Gastrocnemius medialis (tissue), 4 donors: ENCODE measurements at regions of chr17 and their contacts with region 1.

Region 1: GRCh38 chr17:45317112-45317928 is 500 bp upstream of the MAP3K14 start:
- DNase-seq: peak; percentile 100
- ATAC-seq: peak; percentile 84 to 85
- H3K4me3 ChIP-seq: peak overlapping the region; percentile 41 to 74 (median 62)
- H3K27ac ChIP-seq: peak overlapping the region; percentile 86 to 98 (median 92)
- H3K4me1 ChIP-seq: peaks cover 43 to 45% of the 10 kb centered on the region in 2 donors
- H3K27me3 ChIP-seq: no peaks in the 10 kb centered on the region
- CTCF ChIP-seq: peak in 1 of 5 experiments; percentile 6
- POLR2A ChIP-seq: no peak

Region 2: DNA sequence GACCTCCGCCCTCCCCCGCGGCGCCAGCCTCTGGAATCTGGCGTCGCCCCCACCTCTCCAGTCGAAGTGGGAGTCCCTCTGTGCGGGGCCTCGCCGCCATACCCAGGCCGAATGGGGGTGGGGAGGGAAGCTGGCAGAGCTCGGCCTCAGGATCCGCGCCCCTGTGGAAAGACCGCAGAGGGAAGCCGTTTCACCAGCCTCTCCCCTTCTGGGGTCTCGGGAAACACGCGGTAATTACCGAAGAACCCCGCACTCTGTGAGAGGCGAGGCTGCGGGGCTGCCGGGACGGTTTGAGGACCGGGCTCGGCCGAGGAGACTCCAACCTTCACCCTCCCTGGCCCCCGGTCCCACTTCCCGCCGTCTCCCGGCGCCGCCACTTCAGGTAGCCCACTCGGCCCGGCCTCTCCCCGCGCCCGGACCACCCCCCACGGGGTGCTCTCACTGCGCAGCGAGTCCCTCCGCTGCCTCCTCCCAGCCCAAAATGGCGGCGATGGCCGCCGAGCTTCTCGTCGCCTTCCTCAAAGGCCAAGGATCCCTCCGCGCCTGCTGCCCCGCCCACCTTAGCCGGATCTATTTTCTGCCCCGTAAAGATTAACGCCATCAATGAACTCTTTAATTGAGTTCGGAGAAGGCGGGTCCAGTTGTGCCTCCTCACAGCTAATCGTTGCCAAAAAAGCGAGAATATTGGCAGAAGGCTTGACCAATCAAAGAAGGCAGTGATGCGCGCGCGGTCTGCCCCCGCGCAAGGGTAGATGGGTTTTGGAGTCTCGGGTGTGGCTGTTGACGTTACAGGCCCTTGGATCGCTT is 156.1 kb before region 1 on chr17:
- in situ Hi-C with region 1: no loop called
- intact Hi-C with region 1: loop called (anchors 5 kb)
- DNase-seq: peak; percentile 98 to 99
- ATAC-seq: peak; percentile 94 to 98
- H3K4me3 ChIP-seq: peak overlapping the region; percentile 85 to 99 (median 92)
- H3K27ac ChIP-seq: peak overlapping the region; percentile 96 to 100 (median 100)
- H3K4me1 ChIP-seq: peaks cover 38 to 45% of the 10 kb centered on the region in 2 donors
- H3K27me3 ChIP-seq: no peaks in the 10 kb centered on the region
- CTCF ChIP-seq: peak in 2 of 5 experiments; percentile 25 to 40
- POLR2A ChIP-seq: peak; percentile 94 to 95

Region 3: GRCh38 chr17:45260204-45260783 is 57.0 kb before region 1 on chr17:
- in situ Hi-C with region 1: no loop called
- intact Hi-C with region 1: loop called (anchors 1 kb)
- DNase-seq: peak; percentile 87 to 97
- ATAC-seq: peak; percentile 91 to 93
- H3K4me3 ChIP-seq: no peak overlapping the region
- H3K27ac ChIP-seq: peak overlapping the region; percentile 70 to 85 (median 75)
- H3K4me1 ChIP-seq: peaks cover 44 to 50% of the 10 kb centered on the region in 2 donors
- H3K27me3 ChIP-seq: no peaks in the 10 kb centered on the region
- CTCF ChIP-seq: no peak
- POLR2A ChIP-seq: no peak

Region 4: GRCh38 chr17:45284176-45285140 is 32.9 kb before region 1 on chr17:
- in situ Hi-C with region 1: loop called in 3 of 4 experiments (anchors 5 to 10 kb)
- intact Hi-C with region 1: loop called (anchors 1 kb)
- DNase-seq: peak; percentile 94 to 98
- ATAC-seq: peak; percentile 64 to 65
- H3K4me3 ChIP-seq: no peak overlapping the region
- H3K27ac ChIP-seq: peak overlapping the region; percentile 88 to 100 (median 97)
- H3K4me1 ChIP-seq: peaks cover 67 to 75% of the 10 kb centered on the region in 2 donors
- H3K27me3 ChIP-seq: no peaks in the 10 kb centered on the region
- CTCF ChIP-seq: peak; percentile 36 to 54 (median 52)
- POLR2A ChIP-seq: peak; percentile 68 to 73

Region 5: DNA sequence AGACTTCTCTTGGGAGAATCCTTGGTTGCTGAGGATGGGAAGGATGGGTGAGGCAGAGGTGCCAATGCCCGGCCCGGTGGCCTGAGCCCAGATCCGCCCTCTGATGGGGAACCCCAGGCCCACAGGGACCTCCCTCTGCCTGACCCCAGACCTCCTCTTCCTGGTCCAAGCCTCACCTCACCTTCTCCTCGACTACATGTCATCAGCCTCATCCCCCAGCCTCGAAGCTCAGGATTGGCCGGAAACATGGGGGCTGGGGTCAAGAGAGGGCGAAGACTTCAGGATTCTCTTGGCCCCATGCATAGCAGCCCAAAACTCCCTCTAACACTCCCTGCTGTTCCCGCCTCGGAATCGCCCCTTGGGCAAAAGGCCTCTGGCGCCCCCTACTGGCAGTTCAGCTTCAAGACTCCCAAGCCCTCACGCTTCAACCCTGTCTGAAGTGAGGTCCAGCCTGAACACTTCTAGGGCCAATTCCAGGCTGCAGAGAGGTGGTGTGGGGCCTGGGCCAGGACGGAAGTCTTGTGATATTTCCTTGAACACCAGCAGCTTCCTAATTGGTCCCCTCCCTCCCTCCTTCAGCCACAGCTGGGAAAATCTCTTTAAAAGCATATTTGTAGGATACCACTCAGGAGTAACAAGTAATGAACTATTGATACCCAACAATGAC is 68.1 kb after region 1 on chr17:
- in situ Hi-C with region 1: loop called in 1 of 4 experiments (anchors 10 kb)
- intact Hi-C with region 1: loop called (anchors 2 kb)
- DNase-seq: peak; percentile 66 to 80
- ATAC-seq: peak; percentile 95 to 99
- H3K4me3 ChIP-seq: no peak overlapping the region
- H3K27ac ChIP-seq: no peak overlapping the region
- H3K4me1 ChIP-seq: peaks cover 0 to 6% of the 10 kb centered on the region in 2 donors
- H3K27me3 ChIP-seq: peaks cover 0 to 7% (median 0%) of the 10 kb centered on the region in 3 donors
- CTCF ChIP-seq: peak; percentile 97 to 100 (median 98)
- POLR2A ChIP-seq: no peak